Activated T-helper 1 cell treated with anti-CD3 and anti-CD28 coated beads, Interleukin-12 subunit alpha, Interleukin-12 subunit beta, Interleukin-2, Interleukin-4 antibody, amounts not matched to agents 30 ng/mL and 10 ng/mL and 1 ng/mL, durations not matched to agents 14 hours and 24 hours and 36 hours (primary cell): ENCODE measurements at regions of chr1 and their contacts with region 1.

Region 1: GRCh38 chr1:235513495-235514366 is 9.5 kb upstream of the B3GALNT2 start:
- DNase-seq: no peak
- H3K4me3 Mint-ChIP-seq: no peak overlapping the region
- H3K27ac Mint-ChIP-seq: no peak overlapping the region
- H3K4me1 Mint-ChIP-seq: peaks cover 12% of the 10 kb centered on the region
- H3K27me3 Mint-ChIP-seq: peaks cover 22% of the 10 kb centered on the region

Region 2: DNA sequence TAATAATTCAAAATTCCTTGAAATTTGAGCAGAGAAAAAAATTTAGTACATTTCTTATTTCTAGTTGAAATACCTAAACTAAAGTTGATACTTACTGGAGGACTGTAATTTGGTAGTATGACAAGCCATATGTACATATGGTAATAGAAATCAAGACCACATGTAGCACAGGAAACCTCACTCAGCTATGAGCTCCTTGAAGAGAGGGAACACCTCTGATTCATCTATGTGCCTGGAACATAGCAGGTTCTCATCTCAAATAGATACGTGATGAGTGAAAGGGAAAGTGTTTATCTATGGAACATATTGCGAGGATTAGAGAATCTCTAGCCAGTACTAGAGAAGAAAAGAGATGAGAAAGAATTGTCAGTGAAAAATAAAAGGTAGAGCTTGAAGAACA is 183.8 kb after region 1 on chr1:
- intact Hi-C with region 1: loop called (anchors 2 kb)
- DNase-seq: no peak
- H3K4me3 Mint-ChIP-seq: no peak overlapping the region
- H3K27ac Mint-ChIP-seq: peak overlapping the region; percentile 91
- H3K4me1 Mint-ChIP-seq: peaks cover 20% of the 10 kb centered on the region
- H3K27me3 Mint-ChIP-seq: no peaks in the 10 kb centered on the region

Region 3: DNA sequence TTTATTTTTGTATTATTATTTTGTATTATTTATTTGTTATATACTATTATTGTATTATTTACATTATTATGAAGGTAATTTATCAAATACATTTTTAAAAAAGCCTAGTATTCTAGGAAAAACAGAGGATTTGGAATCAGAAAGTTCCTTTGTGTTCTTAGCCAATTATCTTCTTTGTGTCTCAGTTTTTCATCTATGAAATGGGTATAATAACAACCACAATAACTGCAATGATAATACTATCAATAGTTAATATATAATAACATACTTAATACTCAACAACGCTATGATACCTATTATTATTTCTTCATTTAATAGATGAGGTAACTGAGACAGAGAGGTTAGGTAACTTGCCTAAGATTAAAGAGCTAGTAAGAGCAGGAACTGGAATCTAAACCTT is 216.3 kb after region 1 on chr1:
- intact Hi-C with region 1: loop called (anchors 2 kb)
- DNase-seq: no peak
- H3K4me3 Mint-ChIP-seq: no peak overlapping the region
- H3K27ac Mint-ChIP-seq: no peak overlapping the region
- H3K4me1 Mint-ChIP-seq: peaks cover 5% of the 10 kb centered on the region
- H3K27me3 Mint-ChIP-seq: no peaks in the 10 kb centered on the region

Region 4: GRCh38 chr1:235783148-235783776 is 269.5 kb after region 1 on chr1:
- intact Hi-C with region 1: loop called (anchors 1 kb)
- DNase-seq: no peak
- H3K4me3 Mint-ChIP-seq: no peak overlapping the region
- H3K27ac Mint-ChIP-seq: no peak overlapping the region
- H3K4me1 Mint-ChIP-seq: no peaks in the 10 kb centered on the region
- H3K27me3 Mint-ChIP-seq: no peaks in the 10 kb centered on the region

Region 5: GRCh38 chr1:235843461-235843961 is 329.8 kb after region 1 on chr1:
- intact Hi-C with region 1: loop called (anchors 1 kb)
- DNase-seq: no peak
- H3K4me3 Mint-ChIP-seq: no peak overlapping the region
- H3K27ac Mint-ChIP-seq: no peak overlapping the region
- H3K4me1 Mint-ChIP-seq: peaks cover 43% of the 10 kb centered on the region
- H3K27me3 Mint-ChIP-seq: no peaks in the 10 kb centered on the region